ENCODE measurements at regions of chr3 and their contacts with region 1.

Region 1: DNA sequence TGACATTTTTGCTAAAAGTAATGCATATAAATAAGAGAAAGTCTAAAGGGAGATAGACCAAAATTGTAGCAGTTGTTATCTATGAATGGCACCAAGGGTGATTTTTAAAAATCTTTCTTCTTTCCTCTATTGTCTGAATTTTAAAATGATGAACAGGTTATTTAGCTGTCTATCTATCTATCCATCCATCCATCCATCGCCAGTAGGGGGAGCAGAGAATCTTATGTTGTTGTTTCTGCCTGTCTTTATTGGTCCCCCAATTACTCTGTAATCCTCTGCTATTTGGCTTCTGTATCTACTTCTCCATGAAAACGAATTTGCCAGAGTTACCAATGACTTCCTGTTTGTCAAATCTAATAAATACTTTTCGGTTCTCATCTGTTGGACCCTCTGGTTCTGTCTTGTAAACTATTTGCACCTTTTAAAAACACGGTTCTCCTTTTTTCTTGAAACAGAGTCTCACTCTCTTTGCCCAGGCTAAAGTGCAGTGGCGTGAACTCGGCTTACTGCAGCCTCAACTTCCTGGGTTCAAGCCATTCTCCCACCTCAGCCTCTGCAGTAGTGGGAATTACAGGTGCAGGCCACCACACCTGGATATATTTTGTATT is 86.0 kb downstream of the ECT2 start:
- DNase-seq: peak in 2 of 6 donors; percentile 27 to 34
- ATAC-seq: peak in 2 of 4 donors; percentile 68 to 81
- H3K4me3 ChIP-seq: no peak overlapping the region
- H3K27ac ChIP-seq: no peak overlapping the region
- H3K4me1 ChIP-seq: peaks cover 0 to 7% (median 0%) of the 10 kb centered on the region in 3 donors
- H3K27me3 ChIP-seq: no peaks in the 10 kb centered on the region
- CTCF ChIP-seq: peak in 3 of 4 donors; percentile 23 to 40 (median 28)

Region 2: GRCh38 chr3:173045770-173046382 is 209.4 kb after region 1 on chr3:
- intact Hi-C with region 1: loop called in 1 of 3 experiments (anchors 10 kb)
- DNase-seq: no peak
- ATAC-seq: no peak
- H3K4me3 ChIP-seq: no peak overlapping the region
- H3K27ac ChIP-seq: no peak overlapping the region
- H3K4me1 ChIP-seq: no peaks in the 10 kb centered on the region
- H3K27me3 ChIP-seq: peaks cover 0 to 4% (median 0%) of the 10 kb centered on the region in 4 donors
- CTCF ChIP-seq: peak in 3 of 4 donors; percentile 17 to 24 (median 24)

Measured in pancreas (tissue), 10 donors.